Cardiac septum (tissue), 1 donor: ENCODE measurements at regions of chr11 and their contacts with region 1.

Region 1: GRCh38 chr11:126303623-126304456 is at the start of gene DCPS:
- DNase-seq: peak; percentile 97
- total RNA-seq, gene DCPS: 9.9 TPM

Region 2: GRCh38 chr11:126480410-126481302 is 176.8 kb after region 1 on chr11:
- intact Hi-C with region 1: loop called (anchors 1 kb)
- DNase-seq: peak; percentile 88